B cell (primary cell): ENCODE measurements at regions of chr11 and their contacts with region 1.

Region 1: GRCh38 chr11:102390667-102391465 is 43.9 kb downstream of the BIRC2 start:
- DNase-seq: peak; percentile 74
- ATAC-seq: peak; percentile 88
- H3K4me3 ChIP-seq: no peak overlapping the region
- H3K4me3 Mint-ChIP-seq: no peak overlapping the region
- H3K27ac ChIP-seq: no peak overlapping the region
- H3K27ac Mint-ChIP-seq: peak overlapping the region; percentile 46
- H3K4me1 ChIP-seq: no peaks in the 10 kb centered on the region
- H3K4me1 Mint-ChIP-seq: peaks cover 15% of the 10 kb centered on the region
- H3K27me3 ChIP-seq: no peaks in the 10 kb centered on the region
- H3K27me3 Mint-ChIP-seq: no peaks in the 10 kb centered on the region
- CTCF ChIP-seq: peak; percentile 90

Region 2: GRCh38 chr11:102341844-102342318 is 49.0 kb before region 1 on chr11:
- CTCF ChIA-PET with region 1: interaction called, 12 read pairs
- POLR2A ChIA-PET with region 1: interaction called, 7 read pairs
- intact Hi-C with region 1: loop called (anchors 2 kb)
- DNase-seq: peak; percentile 84
- ATAC-seq: peak; percentile 48
- H3K4me3 ChIP-seq: no peak overlapping the region
- H3K4me3 Mint-ChIP-seq: no peak overlapping the region
- H3K27ac ChIP-seq: peak overlapping the region; percentile 19 to 75
- H3K27ac Mint-ChIP-seq: peak overlapping the region; percentile 43
- H3K4me1 ChIP-seq: peaks cover 14 to 16% of the 10 kb centered on the region in 2 donors
- H3K4me1 Mint-ChIP-seq: peaks cover 42% of the 10 kb centered on the region
- H3K27me3 ChIP-seq: no peaks in the 10 kb centered on the region
- H3K27me3 Mint-ChIP-seq: no peaks in the 10 kb centered on the region
- CTCF ChIP-seq: peak; percentile 80

Region 3: DNA sequence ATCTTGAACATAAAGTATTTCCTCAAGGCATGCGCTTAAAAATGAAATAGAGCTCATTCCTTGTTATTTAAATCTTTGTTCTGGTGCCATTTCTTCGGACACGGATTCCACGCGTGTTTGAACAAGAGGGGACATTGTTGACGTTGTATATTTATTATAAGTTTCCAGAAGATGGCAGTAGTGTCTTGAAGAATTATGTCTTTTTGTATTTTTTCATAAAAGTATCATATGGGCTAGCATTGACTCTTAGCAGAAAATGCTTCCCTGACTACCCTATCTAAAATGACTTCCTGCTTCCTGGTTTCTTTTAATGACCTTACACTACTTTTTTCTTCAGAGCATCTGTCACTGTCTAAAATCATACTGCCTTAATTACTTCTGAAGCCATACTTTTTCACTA is 23.5 kb before region 1 on chr11:
- CTCF ChIA-PET with region 1: interaction called, 13 read pairs
- POLR2A ChIA-PET with region 1: no interaction called
- intact Hi-C with region 1: no loop called
- DNase-seq: peak; percentile 47
- ATAC-seq: no peak
- H3K4me3 ChIP-seq: no peak overlapping the region
- H3K4me3 Mint-ChIP-seq: no peak overlapping the region
- H3K27ac ChIP-seq: peak overlapping the region in 1 of 2 donors; percentile 48
- H3K27ac Mint-ChIP-seq: peak overlapping the region; percentile 1
- H3K4me1 ChIP-seq: no peaks in the 10 kb centered on the region
- H3K4me1 Mint-ChIP-seq: peaks cover 16% of the 10 kb centered on the region
- H3K27me3 ChIP-seq: no peaks in the 10 kb centered on the region
- H3K27me3 Mint-ChIP-seq: no peaks in the 10 kb centered on the region
- CTCF ChIP-seq: peak; percentile 61

Region 4: GRCh38 chr11:102451681-102452460 is 61.0 kb after region 1 on chr11:
- CTCF ChIA-PET with region 1: interaction called, 26 read pairs
- POLR2A ChIA-PET with region 1: interaction called, 5 read pairs
- intact Hi-C with region 1: loop called (anchors 2 kb)
- DNase-seq: peak; percentile 88
- ATAC-seq: peak; percentile 58
- H3K4me3 ChIP-seq: peak overlapping the region; percentile 83 to 98 (median 91)
- H3K4me3 Mint-ChIP-seq: peak overlapping the region; percentile 98
- H3K27ac ChIP-seq: peak overlapping the region; percentile 82 to 87
- H3K27ac Mint-ChIP-seq: peak overlapping the region; percentile 98
- H3K4me1 ChIP-seq: peaks cover 56 to 59% of the 10 kb centered on the region in 2 donors
- H3K4me1 Mint-ChIP-seq: peaks cover 73% of the 10 kb centered on the region
- H3K27me3 ChIP-seq: no peaks in the 10 kb centered on the region
- H3K27me3 Mint-ChIP-seq: no peaks in the 10 kb centered on the region
- CTCF ChIP-seq: no peak

Region 5: GRCh38 chr11:102488208-102488607 is 97.3 kb after region 1 on chr11:
- CTCF ChIA-PET with region 1: interaction called, 21 read pairs
- POLR2A ChIA-PET with region 1: no interaction called
- intact Hi-C with region 1: no loop called
- DNase-seq: no peak
- ATAC-seq: no peak
- H3K4me3 ChIP-seq: no peak overlapping the region
- H3K4me3 Mint-ChIP-seq: no peak overlapping the region
- H3K27ac ChIP-seq: no peak overlapping the region
- H3K27ac Mint-ChIP-seq: no peak overlapping the region
- H3K4me1 ChIP-seq: no peaks in the 10 kb centered on the region
- H3K4me1 Mint-ChIP-seq: peaks cover 2% of the 10 kb centered on the region
- H3K27me3 ChIP-seq: no peaks in the 10 kb centered on the region
- H3K27me3 Mint-ChIP-seq: peaks cover 6% of the 10 kb centered on the region
- CTCF ChIP-seq: no peak

Region 6: DNA sequence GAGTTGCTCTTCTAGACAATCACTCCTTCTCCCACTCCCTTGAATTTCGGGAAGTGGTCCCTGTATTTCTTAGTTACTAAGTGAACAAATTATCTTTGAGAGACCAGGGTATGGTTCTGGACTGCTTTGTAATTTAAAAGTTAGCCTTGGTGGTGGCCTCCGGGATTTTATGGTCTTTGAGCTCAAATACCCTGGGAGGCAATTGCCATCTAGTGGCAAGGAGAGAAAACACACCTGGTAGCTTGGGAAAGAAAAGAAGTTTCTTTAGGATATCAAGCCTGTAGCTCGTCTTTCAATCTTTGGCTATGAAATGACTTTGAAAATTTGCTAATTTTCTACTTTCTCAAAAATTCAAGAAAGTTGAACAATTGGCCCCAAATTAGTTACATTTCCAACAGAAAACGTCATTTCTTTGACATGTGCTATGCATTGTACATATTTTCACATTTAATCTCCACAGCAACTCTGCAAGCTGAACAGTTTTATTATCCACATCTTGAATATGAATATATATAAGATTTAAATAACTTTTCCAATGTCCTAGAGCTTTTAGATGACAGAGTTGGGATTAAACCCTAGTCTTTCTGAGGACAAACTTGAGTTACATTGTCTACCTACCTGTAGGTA is 275.6 kb after region 1 on chr11:
- CTCF ChIA-PET with region 1: interaction called, 13 read pairs
- POLR2A ChIA-PET with region 1: no interaction called
- intact Hi-C with region 1: no loop called
- DNase-seq: peak; percentile 55
- ATAC-seq: peak; percentile 36
- H3K4me3 ChIP-seq: no peak overlapping the region
- H3K4me3 Mint-ChIP-seq: no peak overlapping the region
- H3K27ac ChIP-seq: no peak overlapping the region
- H3K27ac Mint-ChIP-seq: no peak overlapping the region
- H3K4me1 ChIP-seq: peaks cover 0 to 5% of the 10 kb centered on the region in 2 donors
- H3K4me1 Mint-ChIP-seq: no peaks in the 10 kb centered on the region
- H3K27me3 ChIP-seq: no peaks in the 10 kb centered on the region
- H3K27me3 Mint-ChIP-seq: peaks cover 3% of the 10 kb centered on the region
- CTCF ChIP-seq: peak; percentile 82